Ascending aorta (tissue), 2 donors: ENCODE measurements at regions of chr16 and their contacts with region 1.

Region 1: GRCh38 chr16:29805378-29806098 is 791 bp upstream of the MAZ start:
- DNase-seq: peak; percentile 89 to 98
- H3K4me3 ChIP-seq: peak overlapping the region; percentile 68 to 87
- H3K27ac ChIP-seq: peak overlapping the region; percentile 95 to 99
- H3K4me1 ChIP-seq: peaks cover 15 to 31% of the 10 kb centered on the region in 2 donors
- H3K27me3 ChIP-seq: no peaks in the 10 kb centered on the region
- CTCF ChIP-seq: peak in 2 of 3 experiments; percentile 10 to 12

Region 2: DNA sequence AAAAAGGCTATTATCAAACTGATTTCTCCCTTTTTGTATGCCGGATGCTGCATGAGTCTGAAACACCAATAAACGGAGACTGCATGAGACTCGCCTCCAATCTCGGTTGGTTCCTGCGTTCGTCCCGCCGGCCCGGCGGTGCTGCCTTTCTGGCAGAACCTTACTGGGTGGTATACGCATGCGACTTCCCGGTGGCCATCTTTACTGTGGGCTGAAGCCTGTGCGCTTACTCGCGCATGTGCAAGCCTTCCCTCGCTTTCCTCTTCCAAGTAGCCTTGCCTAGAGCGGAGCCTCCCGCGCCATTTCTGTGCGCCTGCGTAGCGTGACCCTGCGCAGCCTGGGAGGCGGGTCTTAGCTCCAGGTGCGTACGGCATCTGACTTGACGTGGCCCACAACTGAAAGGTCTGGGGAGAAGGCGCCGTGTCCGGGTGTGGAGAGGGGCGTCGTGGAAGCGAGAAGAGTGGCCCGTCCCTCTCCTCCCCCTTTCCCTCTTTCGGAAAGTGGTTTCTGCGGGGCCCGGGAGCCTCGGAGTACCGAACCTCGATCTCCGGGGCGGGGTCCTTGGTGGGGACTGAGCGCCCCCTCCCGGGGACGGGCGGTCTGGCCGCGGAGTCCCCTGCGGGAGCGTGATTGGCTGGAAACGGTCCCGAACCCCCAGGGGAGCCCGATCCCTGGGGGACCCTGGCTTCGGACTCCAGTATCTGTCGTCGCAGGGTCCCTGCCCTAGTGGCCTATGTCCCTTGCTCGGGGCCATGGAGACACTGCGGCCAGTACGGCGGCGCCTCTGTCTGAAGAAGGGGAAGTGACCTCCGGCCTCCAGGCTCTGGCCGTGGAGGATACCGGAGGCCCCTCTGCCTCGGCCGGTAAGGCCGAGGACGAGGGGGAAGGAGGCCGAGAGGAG is 10.5 kb after region 1 on chr16 and contains the start of gene PAGR1:
- intact Hi-C with region 1: loop called (anchors 1 kb)
- DNase-seq: peak; percentile 96 to 100
- H3K4me3 ChIP-seq: peak within 1 kb of the TSS; percentile 62 to 70
- H3K27ac ChIP-seq: peak within 1 kb of the TSS; percentile 88 to 94
- H3K4me1 ChIP-seq: peaks cover 0 to 39% of the 10 kb centered on the region in 2 donors
- H3K27me3 ChIP-seq: no peaks in the 10 kb centered on the region
- CTCF ChIP-seq: peak; percentile 82 to 91 (median 90)
- total RNA-seq, gene PAGR1: 54.3 TPM

Region 3: DNA sequence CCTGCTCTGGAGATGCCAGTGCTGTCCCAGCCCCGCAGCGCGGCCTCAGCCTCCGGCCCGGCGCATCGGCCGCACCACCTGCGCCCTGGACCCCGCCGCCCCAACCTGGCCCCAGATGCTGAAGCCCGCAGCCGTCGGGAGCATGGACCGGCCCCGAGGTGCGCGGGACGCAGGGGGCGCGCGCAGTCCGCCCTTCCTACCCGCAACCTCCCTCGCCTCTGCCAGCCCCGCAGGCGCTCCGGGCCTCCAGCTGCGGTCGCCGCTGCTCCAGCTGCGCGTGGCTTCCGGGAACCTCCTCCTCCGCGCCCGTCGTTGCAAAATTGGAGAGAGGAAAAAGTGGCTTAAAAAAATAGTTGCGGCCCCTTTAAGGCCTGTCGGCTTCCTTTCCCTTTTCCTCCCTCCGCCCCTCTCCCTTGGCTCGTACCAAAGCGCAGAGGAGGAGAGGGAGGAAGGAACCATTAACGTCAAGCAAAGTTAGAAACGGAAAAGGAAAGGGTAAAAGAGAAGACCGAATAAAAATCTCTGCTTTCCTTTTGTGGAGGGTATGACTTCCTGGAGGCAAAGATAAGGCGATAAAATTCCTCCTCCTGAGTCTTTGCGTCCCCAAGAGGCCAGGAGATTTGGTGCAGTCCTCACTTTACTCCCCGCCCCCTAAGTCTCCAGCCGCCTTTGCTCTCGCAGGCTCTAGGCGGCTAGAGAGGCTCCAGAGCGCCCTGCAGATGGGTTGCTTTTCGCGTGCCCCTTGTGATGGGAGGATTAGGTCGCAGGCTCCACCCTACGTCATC is 57.5 kb after region 1 on chr16 and contains the start of gene CDIPT:
- intact Hi-C with region 1: loop called (anchors 2 kb)
- DNase-seq: peak; percentile 79 to 97
- H3K4me3 ChIP-seq: peak within 1 kb of the TSS; percentile 72 to 99
- H3K27ac ChIP-seq: peak within 1 kb of the TSS; percentile 85 to 93
- H3K4me1 ChIP-seq: peaks cover 4 to 25% of the 10 kb centered on the region in 2 donors
- H3K27me3 ChIP-seq: no peaks in the 10 kb centered on the region
- CTCF ChIP-seq: peak; percentile 57 to 66 (median 59)
- total RNA-seq, gene CDIPT: 174 TPM

Region 4: DNA sequence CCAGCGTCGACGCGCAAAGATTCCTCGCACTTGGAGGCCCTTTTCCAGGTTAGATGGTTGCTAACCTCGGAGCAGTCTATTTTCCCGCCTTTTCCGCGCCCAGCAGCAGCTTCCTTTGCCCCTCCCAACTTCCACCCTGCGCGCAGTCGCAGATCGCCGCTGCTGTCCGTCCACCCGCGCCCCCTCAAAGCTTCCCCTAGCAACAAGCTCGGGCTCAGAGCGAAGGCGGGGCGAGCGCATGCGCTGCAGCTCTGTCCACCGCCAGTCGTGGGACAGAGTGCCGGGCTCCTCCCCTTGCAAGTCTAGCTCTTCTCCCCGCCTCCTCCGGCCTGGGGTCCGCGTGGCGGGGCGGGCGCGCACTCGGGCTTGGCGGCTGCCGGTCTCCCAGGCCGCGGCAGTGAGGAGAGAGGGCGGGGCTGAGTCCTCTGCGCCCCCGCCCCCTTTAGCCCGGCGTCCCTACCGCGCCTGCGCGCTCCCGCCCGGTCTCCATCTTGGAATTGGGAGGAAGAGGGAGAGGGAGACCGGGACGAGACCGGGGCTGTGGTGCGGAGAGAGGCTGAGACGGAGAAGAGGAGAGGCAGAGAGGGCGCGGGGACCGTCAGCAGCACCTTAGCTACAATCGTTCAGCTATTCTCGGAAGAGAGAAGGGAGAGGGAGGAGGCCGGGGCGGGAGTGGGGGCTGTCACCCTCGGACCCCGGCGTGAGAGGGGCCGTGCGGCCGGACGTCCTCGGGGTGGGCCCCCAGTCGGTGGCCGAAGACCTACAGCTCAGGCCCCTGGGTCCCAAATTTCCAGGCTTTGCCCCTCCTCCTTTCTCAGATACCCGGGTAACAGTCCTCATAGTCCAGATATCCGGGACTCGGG is 168.1 kb after region 1 on chr16 and contains the start of gene TAOK2:
- intact Hi-C with region 1: loop called (anchors 5 kb)
- DNase-seq: peak; percentile 94 to 99
- H3K4me3 ChIP-seq: peak within 1 kb of the TSS; percentile 80 to 93
- H3K27ac ChIP-seq: peak within 1 kb of the TSS; percentile 85 to 90
- H3K4me1 ChIP-seq: peaks cover 12 to 24% of the 10 kb centered on the region in 2 donors
- H3K27me3 ChIP-seq: no peaks in the 10 kb centered on the region
- CTCF ChIP-seq: no peak
- total RNA-seq, gene TAOK2: 101 TPM

Region 5: GRCh38 chr16:30065143-30065850 is 259.8 kb after region 1 on chr16 and contains the start of gene ALDOA:
- intact Hi-C with region 1: loop called (anchors 5 kb)
- DNase-seq: peak; percentile 93 to 99
- H3K4me3 ChIP-seq: peak within 1 kb of the TSS; percentile 92
- H3K27ac ChIP-seq: peak within 1 kb of the TSS; percentile 97 to 99
- H3K4me1 ChIP-seq: peaks cover 22 to 51% of the 10 kb centered on the region in 2 donors
- H3K27me3 ChIP-seq: no peaks in the 10 kb centered on the region
- CTCF ChIP-seq: no peak
- total RNA-seq, gene ALDOA: 1,202 TPM